Activated CD8-positive, alpha-beta T cell treated with anti-CD3 and anti-CD28 coated beads for 36 hours (primary cell): ENCODE measurements at regions of chrX and their contacts with region 1.

Region 1: GRCh38 chrX:15493118-15493962 is at the start of gene PIR:
- DNase-seq: peak; percentile 69
- ATAC-seq: peak; percentile 94
- H3K4me3 Mint-ChIP-seq: peak within 1 kb of the TSS; percentile 73
- H3K27ac Mint-ChIP-seq: no peak within 1 kb of the TSS
- H3K4me1 Mint-ChIP-seq: peaks cover 5% of the 10 kb centered on the region
- H3K27me3 Mint-ChIP-seq: peaks cover 2% of the 10 kb centered on the region
- CTCF ChIP-seq: peak; percentile 25
- total RNA-seq, gene PIR: 0.74 to 1.2 TPM

Region 2: DNA sequence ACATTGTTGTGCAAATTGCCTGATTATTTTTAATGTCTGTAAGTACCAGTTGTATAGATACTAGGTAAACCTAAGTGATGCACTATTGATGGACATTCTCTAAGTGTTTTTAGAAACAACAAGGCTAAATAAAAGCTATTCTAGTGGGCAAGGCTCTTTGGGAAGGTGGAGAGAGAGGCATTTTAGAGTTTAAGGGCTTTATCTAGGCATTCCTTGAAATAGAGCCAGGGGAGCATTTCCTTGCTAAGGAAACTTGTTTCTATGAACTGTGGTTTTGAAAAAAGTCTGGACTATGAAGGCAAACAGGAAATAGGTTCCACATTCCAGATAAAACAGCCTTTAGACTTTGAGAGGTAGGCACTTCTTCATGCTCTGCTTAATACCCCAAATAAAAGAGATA is 31.1 kb after region 1 on chrX:
- CTCF ChIA-PET with region 1: no interaction called
- POLR2A ChIA-PET with region 1: no interaction called
- intact Hi-C with region 1: no loop called
- DNase-seq: no peak
- ATAC-seq: no peak
- H3K4me3 Mint-ChIP-seq: no peak overlapping the region
- H3K27ac Mint-ChIP-seq: no peak overlapping the region
- H3K4me1 Mint-ChIP-seq: no peaks in the 10 kb centered on the region
- H3K27me3 Mint-ChIP-seq: peaks cover 4% of the 10 kb centered on the region
- CTCF ChIP-seq: no peak

Region 3: GRCh38 chrX:15564981-15565579 is 71.7 kb after region 1 on chrX:
- CTCF ChIA-PET with region 1: interaction called, 15 read pairs
- POLR2A ChIA-PET with region 1: no interaction called
- intact Hi-C with region 1: no loop called
- DNase-seq: peak; percentile 59
- ATAC-seq: peak; percentile 62
- H3K4me3 Mint-ChIP-seq: no peak overlapping the region
- H3K27ac Mint-ChIP-seq: no peak overlapping the region
- H3K4me1 Mint-ChIP-seq: no peaks in the 10 kb centered on the region
- H3K27me3 Mint-ChIP-seq: peaks cover 6% of the 10 kb centered on the region
- CTCF ChIP-seq: peak; percentile 17

Region 4: GRCh38 chrX:15645258-15645657 is 151.9 kb after region 1 on chrX:
- CTCF ChIA-PET with region 1: no interaction called
- POLR2A ChIA-PET with region 1: no interaction called
- intact Hi-C with region 1: loop called (anchors 10 kb)
- DNase-seq: no peak
- ATAC-seq: no peak
- H3K4me3 Mint-ChIP-seq: no peak overlapping the region
- H3K27ac Mint-ChIP-seq: no peak overlapping the region
- H3K4me1 Mint-ChIP-seq: peaks cover 13% of the 10 kb centered on the region
- H3K27me3 Mint-ChIP-seq: no peaks in the 10 kb centered on the region
- CTCF ChIP-seq: no peak